ENCODE measurements at regions of chr10 and their contacts with region 1.

Region 1: GRCh38 chr10:118315629-118316028 is 26.5 kb downstream of the FAM204A start:
- DNase-seq: no peak
- CTCF ChIP-seq: no peak

Region 2: DNA sequence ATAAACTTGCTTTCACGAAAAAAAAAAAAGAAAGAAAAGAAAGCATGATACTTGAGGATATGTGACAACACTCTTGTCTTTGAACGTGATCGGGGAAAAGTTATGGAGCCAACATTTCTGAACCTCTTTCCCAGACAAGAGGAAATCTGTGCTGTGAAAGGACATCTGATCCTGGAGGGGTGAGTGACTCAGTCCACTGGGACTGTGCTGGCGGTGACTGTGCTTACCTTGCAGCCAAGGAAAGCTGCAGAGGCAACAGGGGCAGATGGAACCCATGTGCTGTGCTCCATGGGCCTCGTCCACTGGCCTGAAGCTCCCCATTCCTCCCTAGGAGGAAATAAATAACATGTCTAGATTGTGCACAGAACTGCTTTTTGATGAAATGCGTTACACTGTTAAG is 152.4 kb before region 1 on chr10:
- CTCF ChIA-PET with region 1: no interaction called
- POLR2A ChIA-PET with region 1: no interaction called
- DNase-seq: no peak
- CTCF ChIP-seq: no peak

Region 3: GRCh38 chr10:118330295-118331076 is 14.9 kb after region 1 on chr10:
- CTCF ChIA-PET with region 1: interaction called, 14 read pairs
- POLR2A ChIA-PET with region 1: no interaction called
- DNase-seq: no peak
- CTCF ChIP-seq: no peak

Measured in GM10248 (cell line).